ENCODE measurements at regions of chr11 and their contacts with region 1.

Region 1: GRCh38 chr11:67492801-67493547 is 10.1 kb downstream of the AIP start:
- DNase-seq: peak in 2 of 6 donors; percentile 47 to 78
- ATAC-seq: no peak
- H3K4me3 ChIP-seq: no peak overlapping the region
- H3K27ac ChIP-seq: no peak overlapping the region
- H3K4me1 ChIP-seq: no peaks in the 10 kb centered on the region
- H3K27me3 ChIP-seq: no peaks in the 10 kb centered on the region
- CTCF ChIP-seq: no peak

Region 2: GRCh38 chr11:67439321-67439883 is 53.6 kb before region 1 on chr11:
- intact Hi-C with region 1: loop called in 1 of 3 experiments (anchors 10 kb)
- DNase-seq: peak in 3 of 6 donors; percentile 53 to 76 (median 62)
- ATAC-seq: no peak
- H3K4me3 ChIP-seq: no peak overlapping the region
- H3K27ac ChIP-seq: no peak overlapping the region
- H3K4me1 ChIP-seq: peaks cover 0 to 10% (median 5%) of the 10 kb centered on the region in 3 donors
- H3K27me3 ChIP-seq: no peaks in the 10 kb centered on the region
- CTCF ChIP-seq: no peak